ENCODE measurements at regions of chr4 and their contacts with region 1.

Region 1: DNA sequence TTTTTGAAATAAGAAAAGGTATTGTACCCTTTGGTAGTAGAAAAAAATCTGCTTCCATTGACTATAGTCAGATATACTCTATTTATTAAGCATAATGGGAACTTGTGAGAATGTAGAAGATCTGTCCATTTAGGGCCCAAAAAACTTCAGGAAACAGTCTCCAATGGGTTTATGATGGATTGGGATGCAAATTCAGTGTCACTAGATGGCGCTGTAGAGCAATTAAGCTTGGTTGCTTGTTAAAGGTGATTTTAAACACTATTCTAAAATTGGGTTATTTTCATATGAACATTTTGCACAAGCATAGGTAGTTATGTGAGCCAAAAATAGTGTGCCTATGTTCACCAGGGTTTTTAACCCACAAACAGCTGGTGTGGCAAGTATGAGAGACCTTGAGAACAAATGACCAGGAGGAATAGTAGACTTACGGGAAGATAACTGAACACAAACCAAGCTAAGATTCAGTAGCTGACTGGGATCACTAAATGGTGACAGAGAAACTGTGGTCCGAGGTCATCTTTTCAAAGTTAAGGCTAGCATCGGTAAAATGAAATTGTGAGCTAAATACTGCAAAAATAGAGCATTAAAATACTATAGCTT is 80.3 kb upstream of the LSM6 start:
- DNase-seq: no peak

Region 2: DNA sequence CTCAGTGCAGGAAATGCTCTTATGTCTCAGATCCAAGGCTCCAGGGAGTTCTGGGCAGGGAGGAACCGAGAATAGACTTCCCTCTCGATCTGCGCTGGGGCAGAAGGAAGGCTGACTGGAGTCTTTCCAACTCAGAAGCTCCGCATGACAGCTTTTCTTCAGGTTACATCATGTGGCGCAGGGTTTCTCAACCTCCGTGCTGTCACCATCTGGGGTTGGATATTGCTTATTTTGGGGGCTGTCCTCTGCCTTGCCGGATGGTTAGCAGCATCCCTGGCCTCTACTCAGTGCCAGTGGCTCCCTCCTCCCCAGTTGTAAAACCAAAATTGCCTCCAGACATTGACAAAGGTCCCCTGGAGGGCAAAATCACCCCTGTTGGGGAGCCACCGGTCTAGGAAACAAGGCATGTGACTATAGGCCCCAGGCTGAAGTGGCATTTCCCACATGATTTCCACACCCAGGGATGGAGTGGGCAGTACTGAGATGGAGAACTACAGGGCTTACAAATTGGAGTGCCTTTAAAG is 140.5 kb after region 1 on chr4:
- intact Hi-C with region 1: loop called (anchors 10 kb)
- DNase-seq: no peak

Region 3: GRCh38 chr4:146333187-146333894 is 238.2 kb after region 1 on chr4:
- intact Hi-C with region 1: loop called (anchors 10 kb)
- DNase-seq: no peak

Measured in cardiac septum (tissue), 1 donor.